A549 (cell line): ENCODE measurements at regions of chr15 and their contacts with region 1.

Region 1: GRCh38 chr15:70722266-70723121 is 40.9 kb downstream of the UACA start:
- DNase-seq: peak; percentile 65 to 78
- ATAC-seq: peak; percentile 21 to 65; a peak in 3 of 6 replicates
- H3K4me3 ChIP-seq: no peak overlapping the region
- H3K27ac ChIP-seq: peak overlapping the region in 1 of 2 experiments; percentile 45; a peak in 2 of 6 replicates
- H3K4me1 ChIP-seq: peaks cover 19% of the 10 kb centered on the region
- CTCF ChIP-seq: peak; percentile 90
- EP300 ChIP-seq: no peak
- POLR2A ChIP-seq: no peak
- RAD21 ChIP-seq: peak; percentile 69 to 80

Region 2: GRCh38 chr15:70670680-70671079 is 51.8 kb before region 1 on chr15:
- CTCF ChIA-PET with region 1: interaction called, 10 read pairs
- POLR2A ChIA-PET with region 1: no interaction called
- DNase-seq: no peak
- ATAC-seq: no peak
- H3K4me3 ChIP-seq: no peak overlapping the region
- H3K27ac ChIP-seq: no peak overlapping the region
- H3K4me1 ChIP-seq: peaks cover 6% of the 10 kb centered on the region
- CTCF ChIP-seq: peak; percentile 64
- EP300 ChIP-seq: no peak
- POLR2A ChIP-seq: no peak
- RAD21 ChIP-seq: peak; percentile 65 to 67

Region 3: GRCh38 chr15:70690491-70691257 is 31.8 kb before region 1 on chr15:
- CTCF ChIA-PET with region 1: interaction called, 30 read pairs
- POLR2A ChIA-PET with region 1: no interaction called
- DNase-seq: peak in 1 of 2 experiments; percentile 26
- ATAC-seq: no peak
- H3K4me3 ChIP-seq: no peak overlapping the region; the same call in 2 of the 3 replicates
- H3K27ac ChIP-seq: peak overlapping the region; percentile 3 to 11; a peak in 1 of 6 replicates
- H3K4me1 ChIP-seq: peaks cover 38% of the 10 kb centered on the region
- CTCF ChIP-seq: no peak
- EP300 ChIP-seq: no peak
- POLR2A ChIP-seq: no peak
- RAD21 ChIP-seq: no peak

Region 4: DNA sequence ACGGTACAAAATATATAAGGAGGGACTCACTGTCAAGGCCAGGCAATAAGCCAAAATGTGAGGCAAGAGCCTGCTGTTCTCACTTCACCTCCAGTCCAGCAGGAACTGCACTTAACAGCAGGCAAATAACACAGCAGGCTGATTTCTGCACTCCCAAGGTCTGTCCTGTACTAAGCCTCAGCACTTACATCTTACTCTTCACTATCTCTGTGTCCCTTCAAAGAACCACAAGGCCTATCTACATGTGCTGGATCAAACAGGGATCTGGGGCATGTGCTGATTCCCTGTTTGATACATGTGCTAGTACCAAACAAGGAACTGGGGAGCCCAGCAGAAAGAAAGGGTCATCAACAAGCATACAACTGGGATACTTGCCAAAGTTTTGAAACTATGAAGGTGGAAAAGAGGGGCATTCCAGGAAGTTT is 18.6 kb after region 1 on chr15:
- CTCF ChIA-PET with region 1: interaction called, 16 read pairs
- POLR2A ChIA-PET with region 1: no interaction called
- DNase-seq: peak; percentile 55 to 76
- ATAC-seq: peak; percentile 81 to 83
- H3K4me3 ChIP-seq: no peak overlapping the region
- H3K27ac ChIP-seq: peak overlapping the region; percentile 63 to 80
- H3K4me1 ChIP-seq: peaks cover 42% of the 10 kb centered on the region
- CTCF ChIP-seq: no peak
- EP300 ChIP-seq: no peak
- POLR2A ChIP-seq: no peak
- RAD21 ChIP-seq: no peak

Region 5: DNA sequence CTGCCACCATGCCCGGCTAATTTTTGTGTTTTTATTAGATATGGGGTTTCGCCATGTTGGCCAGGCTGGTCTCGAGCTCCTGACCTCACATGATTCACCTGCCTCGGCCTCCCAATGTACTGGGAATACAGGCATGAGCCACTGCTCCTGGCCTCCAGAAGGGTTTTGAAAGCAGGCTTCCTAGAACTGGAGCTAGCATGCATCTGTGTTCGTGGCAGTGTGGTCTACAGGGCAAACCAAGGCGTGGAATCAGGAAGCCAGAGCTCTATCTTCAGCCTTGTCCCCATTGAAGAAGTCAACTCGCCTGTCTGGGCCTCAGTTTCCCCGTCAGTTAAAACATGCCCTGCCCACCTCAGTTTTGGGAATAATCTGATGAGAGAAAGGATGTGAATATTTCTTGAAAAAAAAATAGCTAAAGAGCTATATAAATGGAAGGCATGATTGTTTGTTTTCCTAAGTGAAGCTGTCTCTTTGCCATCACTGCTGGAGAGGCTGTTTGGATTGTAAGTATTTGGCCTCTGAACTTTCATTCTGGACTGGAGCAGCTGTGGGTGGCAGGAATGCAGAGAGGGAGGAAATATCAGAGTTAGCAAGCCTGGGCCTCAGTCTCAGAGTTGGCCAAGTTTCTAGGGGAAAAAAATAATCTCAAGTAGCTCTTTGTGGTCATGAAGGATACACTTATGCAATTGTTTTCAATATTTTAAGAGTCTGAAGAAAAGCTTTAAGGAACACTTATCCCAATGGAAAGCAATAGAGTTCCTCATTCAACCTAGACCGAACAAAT is 77.4 kb after region 1 on chr15:
- CTCF ChIA-PET with region 1: interaction called, 12 read pairs
- POLR2A ChIA-PET with region 1: no interaction called
- DNase-seq: no peak
- ATAC-seq: peak in 1 of 2 experiments; percentile 18; a peak in 1 of 6 replicates
- H3K4me3 ChIP-seq: no peak overlapping the region
- H3K27ac ChIP-seq: peak overlapping the region; percentile 37 to 93; a peak in 5 of 6 replicates
- H3K4me1 ChIP-seq: peaks cover 38% of the 10 kb centered on the region
- CTCF ChIP-seq: no peak
- EP300 ChIP-seq: no peak
- POLR2A ChIP-seq: no peak
- RAD21 ChIP-seq: no peak

Region 6: DNA sequence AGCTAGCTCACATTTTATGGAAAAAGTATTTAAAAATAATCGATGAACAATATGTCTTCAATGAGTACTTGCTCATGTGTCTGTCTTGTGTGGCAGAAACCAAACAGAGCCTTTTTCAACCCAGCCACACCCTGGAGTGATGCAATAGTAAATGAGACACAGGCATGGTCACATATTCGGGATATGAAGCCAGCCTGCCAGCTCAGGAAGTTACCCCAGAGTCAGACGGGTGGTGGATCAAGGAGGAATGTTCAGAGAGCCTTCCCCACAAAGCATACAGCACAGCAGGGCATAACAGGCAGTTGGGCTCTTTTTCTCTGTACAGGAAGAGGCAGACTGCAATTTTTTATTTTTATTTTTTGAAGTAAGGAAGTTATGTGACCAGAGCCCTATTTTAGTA is 104.1 kb after region 1 on chr15:
- CTCF ChIA-PET with region 1: interaction called, 12 read pairs
- POLR2A ChIA-PET with region 1: no interaction called
- DNase-seq: peak; percentile 58 to 78
- ATAC-seq: peak; percentile 67 to 68; a peak in 5 of 6 replicates
- H3K4me3 ChIP-seq: no peak overlapping the region
- H3K27ac ChIP-seq: peak overlapping the region; percentile 69 to 85
- H3K4me1 ChIP-seq: peaks cover 41% of the 10 kb centered on the region
- CTCF ChIP-seq: no peak
- EP300 ChIP-seq: no peak
- POLR2A ChIP-seq: no peak
- RAD21 ChIP-seq: no peak